CD8-positive, alpha-beta T cell (primary cell): ENCODE measurements at regions of chr10 and their contacts with region 1.

Region 1: DNA sequence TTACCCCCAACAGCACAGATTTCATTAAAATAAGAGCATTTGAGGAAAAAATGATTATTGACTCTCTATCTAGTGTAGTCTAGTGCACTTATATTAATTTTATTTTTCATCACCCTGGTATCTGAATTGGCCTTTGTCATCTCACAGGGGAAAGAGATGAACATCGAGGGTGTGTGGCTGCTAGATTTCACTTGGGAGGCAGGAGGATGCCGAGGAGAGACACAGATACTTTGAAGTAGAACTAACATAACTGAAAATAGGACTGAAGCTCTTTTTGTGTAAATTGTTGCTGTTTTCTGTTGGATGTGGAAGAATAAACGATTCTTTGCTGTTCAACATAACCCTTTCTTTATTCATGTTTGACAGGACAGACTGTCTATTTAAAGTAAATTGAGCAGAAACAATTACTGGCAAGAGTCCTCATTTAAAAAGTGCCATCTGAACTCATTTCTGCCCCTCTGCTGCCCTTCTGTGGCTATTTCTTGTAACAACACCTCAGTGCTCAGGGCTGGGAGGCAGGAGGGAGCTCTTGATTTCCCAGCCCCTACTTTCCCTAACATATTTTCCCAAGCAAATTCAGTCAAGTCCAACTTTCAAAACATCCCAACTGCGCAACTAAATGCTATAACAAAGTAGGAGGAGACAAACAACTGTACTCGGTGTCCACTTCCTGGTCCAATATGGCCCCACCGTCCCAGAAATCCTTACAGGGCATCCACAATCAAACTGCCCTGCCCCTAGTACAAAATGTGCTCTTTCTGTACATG is 15.6 kb downstream of the LYZL1 start:
- DNase-seq: peak in 3 of 9 experiments; percentile 10 to 46 (median 34)
- ATAC-seq: no peak
- H3K4me3 ChIP-seq: no peak overlapping the region
- H3K4me3 Mint-ChIP-seq: no peak overlapping the region
- H3K27ac ChIP-seq: no peak overlapping the region
- H3K27ac Mint-ChIP-seq: no peak overlapping the region
- H3K4me1 ChIP-seq: no peaks in the 10 kb centered on the region
- H3K4me1 Mint-ChIP-seq: peaks cover 2% of the 10 kb centered on the region
- H3K27me3 ChIP-seq: no peaks in the 10 kb centered on the region
- H3K27me3 Mint-ChIP-seq: peaks cover 35% of the 10 kb centered on the region
- CTCF ChIP-seq: peak; percentile 27

Region 2: GRCh38 chr10:28628184-28628893 is 676.1 kb before region 1 on chr10:
- CTCF ChIA-PET with region 1: interaction called, 3 read pairs
- POLR2A ChIA-PET with region 1: no interaction called
- intact Hi-C with region 1: loop called in 1 of 2 experiments (anchors 2 kb)
- DNase-seq: peak; percentile 26 to 77 (median 66)
- ATAC-seq: peak; percentile 84
- H3K4me3 ChIP-seq: no peak overlapping the region
- H3K4me3 Mint-ChIP-seq: no peak overlapping the region
- H3K27ac ChIP-seq: no peak overlapping the region
- H3K27ac Mint-ChIP-seq: no peak overlapping the region
- H3K4me1 ChIP-seq: no peaks in the 10 kb centered on the region
- H3K4me1 Mint-ChIP-seq: peaks cover 15% of the 10 kb centered on the region
- H3K27me3 ChIP-seq: peaks cover 0 to 2% of the 10 kb centered on the region in 2 experiments
- H3K27me3 Mint-ChIP-seq: peaks cover 24% of the 10 kb centered on the region
- CTCF ChIP-seq: peak; percentile 88

Region 3: DNA sequence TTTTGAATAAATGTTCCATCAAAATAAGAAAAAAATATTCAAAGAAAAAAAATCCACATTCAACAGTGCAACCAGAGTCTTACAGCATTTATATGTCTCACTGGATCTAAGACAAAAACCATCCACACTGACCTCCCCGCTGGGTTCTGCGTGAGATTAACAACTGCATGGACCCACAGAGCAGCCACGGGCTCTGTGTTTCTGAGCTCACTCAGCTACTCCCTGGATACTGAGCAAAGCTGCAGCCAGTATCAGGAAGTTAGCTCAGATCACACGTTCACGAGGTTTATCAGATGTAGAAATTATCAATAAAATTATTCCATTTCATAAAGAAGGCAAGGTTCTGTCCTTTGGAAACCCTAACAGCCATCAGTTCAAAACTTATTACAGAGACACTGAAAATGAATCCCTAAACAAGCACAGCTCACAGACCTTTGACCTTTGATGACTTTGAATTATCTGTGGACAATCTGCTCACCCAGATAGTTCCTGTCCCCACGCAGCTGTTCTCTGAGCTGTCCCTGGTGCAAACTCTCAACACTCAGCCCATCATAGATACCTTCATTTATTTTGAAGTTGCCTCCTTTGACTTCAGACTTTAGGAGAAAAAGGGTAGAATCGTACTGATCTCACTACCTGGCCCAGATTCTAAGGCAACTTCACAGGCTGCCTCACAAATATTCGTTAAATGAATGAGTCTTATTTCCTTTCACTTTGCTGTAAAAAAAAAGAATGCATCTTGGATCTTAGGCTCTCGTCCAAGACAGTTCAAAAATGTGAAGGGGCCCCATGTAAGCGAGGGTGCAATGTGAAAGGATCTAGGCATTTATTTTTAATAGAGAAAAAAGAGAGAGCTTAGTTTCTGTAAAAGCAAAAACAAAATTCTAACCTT is 398.1 kb after region 1 on chr10:
- CTCF ChIA-PET with region 1: no interaction called
- POLR2A ChIA-PET with region 1: no interaction called
- intact Hi-C with region 1: no loop called
- DNase-seq: peak in 1 of 9 experiments; percentile 20
- ATAC-seq: peak; percentile 31
- H3K4me3 ChIP-seq: peak overlapping the region in 1 of 2 experiments; percentile 10
- H3K4me3 Mint-ChIP-seq: peak overlapping the region; percentile 65
- H3K27ac ChIP-seq: peak overlapping the region; percentile 2 to 50
- H3K27ac Mint-ChIP-seq: peak overlapping the region; percentile 78
- H3K4me1 ChIP-seq: peaks cover 24% of the 10 kb centered on the region
- H3K4me1 Mint-ChIP-seq: peaks cover 34% of the 10 kb centered on the region
- H3K27me3 ChIP-seq: no peaks in the 10 kb centered on the region
- H3K27me3 Mint-ChIP-seq: no peaks in the 10 kb centered on the region
- CTCF ChIP-seq: no peak